ENCODE measurements at regions of chr4 and their contacts with region 1.

Region 1: GRCh38 chr4:74357994-74358393 is 7.0 kb upstream of the EREG start:
- DNase-seq: no peak
- ATAC-seq: no peak
- H3K4me3 ChIP-seq: no peak overlapping the region
- H3K4me3 Mint-ChIP-seq: no peak overlapping the region
- H3K27ac ChIP-seq: no peak overlapping the region
- H3K27ac Mint-ChIP-seq: no peak overlapping the region
- H3K4me1 ChIP-seq: no peaks in the 10 kb centered on the region
- H3K4me1 Mint-ChIP-seq: no peaks in the 10 kb centered on the region
- H3K27me3 ChIP-seq: peaks cover 0 to 6% of the 10 kb centered on the region in 2 experiments
- H3K27me3 Mint-ChIP-seq: peaks cover 11% of the 10 kb centered on the region
- CTCF ChIP-seq: no peak

Region 2: DNA sequence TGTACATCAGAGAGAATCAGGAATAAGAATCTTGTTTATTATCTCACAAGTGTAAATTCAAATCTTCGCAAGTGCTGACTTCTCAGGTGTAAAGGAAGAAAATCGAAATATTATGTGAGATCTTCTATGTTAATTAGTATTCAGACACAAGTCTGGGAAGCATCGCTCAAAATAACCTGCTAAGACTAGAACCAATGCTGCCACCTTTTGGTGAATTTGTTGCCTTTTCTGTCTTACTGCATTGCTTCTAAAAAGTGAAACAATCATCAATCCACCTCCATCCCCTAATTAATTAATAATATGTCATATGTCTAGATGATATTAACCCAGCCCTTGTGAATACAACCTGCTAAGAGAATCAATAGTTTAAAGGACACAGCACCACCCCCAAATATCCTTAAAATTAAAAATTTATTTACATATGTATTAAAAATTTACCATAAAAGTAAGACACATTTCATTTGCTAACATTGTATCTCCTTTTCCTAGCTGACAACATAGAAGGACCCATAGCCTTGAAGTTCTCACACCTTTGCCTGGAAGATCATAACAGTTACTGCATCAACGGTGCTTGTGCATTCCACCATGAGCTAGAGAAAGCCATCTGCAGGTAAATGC is 46.2 kb before region 1 on chr4:
- CTCF ChIA-PET with region 1: no interaction called
- POLR2A ChIA-PET with region 1: no interaction called
- intact Hi-C with region 1: no loop called
- DNase-seq: peak in 4 of 14 experiments; percentile 36 to 69 (median 58)
- ATAC-seq: no peak
- H3K4me3 ChIP-seq: no peak overlapping the region
- H3K4me3 Mint-ChIP-seq: no peak overlapping the region
- H3K27ac ChIP-seq: no peak overlapping the region
- H3K27ac Mint-ChIP-seq: no peak overlapping the region
- H3K4me1 ChIP-seq: no peaks in the 10 kb centered on the region
- H3K4me1 Mint-ChIP-seq: peaks cover 23% of the 10 kb centered on the region
- H3K27me3 ChIP-seq: no peaks in the 10 kb centered on the region
- H3K27me3 Mint-ChIP-seq: no peaks in the 10 kb centered on the region
- CTCF ChIP-seq: peak; percentile 51

Region 3: DNA sequence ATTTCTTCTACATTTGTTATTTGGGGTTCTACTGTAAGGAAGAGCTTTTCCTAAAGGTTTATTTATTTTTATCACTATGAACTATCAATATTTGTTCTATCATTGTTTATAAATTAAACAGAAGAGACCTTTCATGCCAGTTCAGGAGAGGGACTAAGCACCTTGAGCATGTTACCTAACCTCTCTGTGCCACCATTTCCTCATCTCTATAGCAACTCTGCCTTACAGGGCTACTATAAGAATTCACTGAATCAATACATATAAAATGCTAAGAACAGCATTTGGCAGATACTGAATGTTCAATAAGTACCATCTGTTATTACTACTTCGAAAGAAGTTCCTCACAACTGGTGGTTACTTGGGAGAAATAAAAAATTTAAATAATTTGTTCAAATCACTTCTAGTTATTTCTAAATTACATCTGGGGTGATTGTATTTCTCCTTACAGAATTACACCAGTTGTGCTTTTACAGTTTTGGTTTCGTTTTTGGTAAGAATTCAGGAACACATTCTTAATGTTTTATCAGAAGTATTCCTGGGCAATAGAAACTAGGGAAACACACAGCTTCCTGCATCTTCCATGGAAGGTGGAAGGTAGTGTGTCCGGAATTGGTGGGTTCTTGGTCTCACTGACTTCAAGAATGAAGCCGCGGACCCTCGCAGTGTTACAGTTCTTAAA is 39.9 kb after region 1 on chr4:
- CTCF ChIA-PET with region 1: no interaction called
- POLR2A ChIA-PET with region 1: no interaction called
- intact Hi-C with region 1: loop called in 1 of 2 experiments (anchors 2 kb)
- DNase-seq: peak in 5 of 14 experiments; percentile 5 to 61 (median 49)
- ATAC-seq: peak; percentile 83
- H3K4me3 ChIP-seq: peak overlapping the region; percentile 73
- H3K4me3 Mint-ChIP-seq: peak overlapping the region; percentile 94
- H3K27ac ChIP-seq: peak overlapping the region; percentile 64 to 83
- H3K27ac Mint-ChIP-seq: peak overlapping the region; percentile 94
- H3K4me1 ChIP-seq: no peaks in the 10 kb centered on the region
- H3K4me1 Mint-ChIP-seq: peaks cover 13% of the 10 kb centered on the region
- H3K27me3 ChIP-seq: no peaks in the 10 kb centered on the region
- H3K27me3 Mint-ChIP-seq: no peaks in the 10 kb centered on the region
- CTCF ChIP-seq: no peak